ENCODE measurements at regions of chr3 and their contacts with region 1.

Region 1: DNA sequence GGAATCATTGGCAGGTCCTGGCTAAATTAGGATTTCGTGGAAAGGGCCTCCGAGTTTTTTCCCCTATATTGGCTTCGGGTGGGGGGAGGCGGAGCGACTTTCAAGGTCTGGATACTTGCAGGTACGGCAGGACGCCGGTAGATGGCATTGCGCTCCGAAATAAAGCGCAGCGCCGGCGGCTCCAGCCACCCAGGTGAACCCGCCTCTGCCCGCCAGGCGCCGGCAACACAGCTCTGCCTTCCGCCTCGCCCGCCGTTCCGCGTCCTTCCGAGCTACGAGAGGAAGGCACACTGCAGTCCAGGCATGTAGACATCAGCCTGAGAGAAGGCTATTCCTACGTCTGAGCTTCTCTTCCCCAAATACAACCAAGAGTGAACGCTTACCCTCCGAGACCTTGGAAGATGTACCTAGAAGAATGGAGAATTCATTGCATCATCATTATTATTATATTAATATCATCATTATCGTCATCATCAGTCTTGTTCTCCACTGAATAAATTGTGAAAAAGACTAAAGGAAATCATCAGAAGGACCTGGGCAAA is 514.1 kb downstream of the MECOM start:
- DNase-seq: peak; percentile 89
- ATAC-seq: peak; percentile 71
- H3K4me3 Mint-ChIP-seq: peak overlapping the region; percentile 84
- H3K27ac Mint-ChIP-seq: no peak overlapping the region
- H3K4me1 Mint-ChIP-seq: peaks cover 46% of the 10 kb centered on the region
- H3K27me3 Mint-ChIP-seq: peaks cover 55% of the 10 kb centered on the region
- CTCF ChIP-seq: peak; percentile 72

Region 2: GRCh38 chr3:168865022-168865551 is 284.3 kb before region 1 on chr3:
- CTCF ChIA-PET with region 1: interaction called, 12 read pairs
- POLR2A ChIA-PET with region 1: no interaction called
- DNase-seq: no peak
- ATAC-seq: no peak
- H3K4me3 Mint-ChIP-seq: no peak overlapping the region
- H3K27ac Mint-ChIP-seq: no peak overlapping the region
- H3K4me1 Mint-ChIP-seq: peaks cover 8% of the 10 kb centered on the region
- H3K27me3 Mint-ChIP-seq: no peaks in the 10 kb centered on the region
- CTCF ChIP-seq: peak; percentile 68

Region 3: DNA sequence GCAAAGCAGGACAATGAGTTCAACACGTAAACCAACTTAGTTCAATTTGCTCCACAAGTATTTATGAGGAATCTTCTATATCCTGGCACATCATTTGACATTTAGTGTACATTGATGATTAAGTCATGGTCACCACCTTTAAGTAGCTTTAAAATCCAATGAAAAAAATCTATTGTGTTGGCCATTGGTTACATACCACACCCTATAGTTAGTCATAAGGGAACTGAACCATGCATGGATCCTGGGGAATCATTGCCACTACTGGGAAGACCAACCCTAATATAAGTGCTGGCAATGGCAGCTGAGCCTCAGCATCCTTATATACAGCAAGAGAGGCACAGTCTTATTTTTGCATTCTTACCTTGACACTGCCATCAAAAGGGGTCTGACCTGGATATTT is 11.6 kb after region 1 on chr3:
- CTCF ChIA-PET with region 1: interaction called, 11 read pairs
- POLR2A ChIA-PET with region 1: interaction called, 3 read pairs
- DNase-seq: no peak
- ATAC-seq: no peak
- H3K4me3 Mint-ChIP-seq: no peak overlapping the region
- H3K27ac Mint-ChIP-seq: no peak overlapping the region
- H3K4me1 Mint-ChIP-seq: peaks cover 10% of the 10 kb centered on the region
- H3K27me3 Mint-ChIP-seq: no peaks in the 10 kb centered on the region
- CTCF ChIP-seq: no peak

Region 4: GRCh38 chr3:169213956-169214355 is 64.5 kb after region 1 on chr3:
- CTCF ChIA-PET with region 1: interaction called, 11 read pairs
- POLR2A ChIA-PET with region 1: no interaction called
- DNase-seq: no peak
- ATAC-seq: no peak
- H3K4me3 Mint-ChIP-seq: no peak overlapping the region
- H3K27ac Mint-ChIP-seq: no peak overlapping the region
- H3K4me1 Mint-ChIP-seq: peaks cover 5% of the 10 kb centered on the region
- H3K27me3 Mint-ChIP-seq: no peaks in the 10 kb centered on the region
- CTCF ChIP-seq: no peak

Region 5: GRCh38 chr3:169662132-169662842 is 512.9 kb after region 1 on chr3:
- CTCF ChIA-PET with region 1: interaction called, 142 read pairs
- POLR2A ChIA-PET with region 1: interaction called, 3 read pairs
- DNase-seq: peak; percentile 90
- ATAC-seq: peak; percentile 53
- H3K4me3 Mint-ChIP-seq: peak overlapping the region; percentile 86
- H3K27ac Mint-ChIP-seq: peak overlapping the region; percentile 44; the same call in 1 of the 2 replicates
- H3K4me1 Mint-ChIP-seq: peaks cover 70% of the 10 kb centered on the region
- H3K27me3 Mint-ChIP-seq: peaks cover 87% of the 10 kb centered on the region
- CTCF ChIP-seq: peak; percentile 58

Region 6: GRCh38 chr3:169744366-169745054 is 595.1 kb after region 1 on chr3:
- CTCF ChIA-PET with region 1: interaction called, 21 read pairs
- POLR2A ChIA-PET with region 1: no interaction called
- DNase-seq: no peak
- ATAC-seq: peak; percentile 89
- H3K4me3 Mint-ChIP-seq: no peak overlapping the region
- H3K27ac Mint-ChIP-seq: no peak overlapping the region
- H3K4me1 Mint-ChIP-seq: peaks cover 29% of the 10 kb centered on the region
- H3K27me3 Mint-ChIP-seq: no peaks in the 10 kb centered on the region
- CTCF ChIP-seq: no peak; the same call in 1 of the 2 replicates